MCF 10A (cell line): ENCODE measurements at regions of chr5 and their contacts with region 1.

Region 1: DNA sequence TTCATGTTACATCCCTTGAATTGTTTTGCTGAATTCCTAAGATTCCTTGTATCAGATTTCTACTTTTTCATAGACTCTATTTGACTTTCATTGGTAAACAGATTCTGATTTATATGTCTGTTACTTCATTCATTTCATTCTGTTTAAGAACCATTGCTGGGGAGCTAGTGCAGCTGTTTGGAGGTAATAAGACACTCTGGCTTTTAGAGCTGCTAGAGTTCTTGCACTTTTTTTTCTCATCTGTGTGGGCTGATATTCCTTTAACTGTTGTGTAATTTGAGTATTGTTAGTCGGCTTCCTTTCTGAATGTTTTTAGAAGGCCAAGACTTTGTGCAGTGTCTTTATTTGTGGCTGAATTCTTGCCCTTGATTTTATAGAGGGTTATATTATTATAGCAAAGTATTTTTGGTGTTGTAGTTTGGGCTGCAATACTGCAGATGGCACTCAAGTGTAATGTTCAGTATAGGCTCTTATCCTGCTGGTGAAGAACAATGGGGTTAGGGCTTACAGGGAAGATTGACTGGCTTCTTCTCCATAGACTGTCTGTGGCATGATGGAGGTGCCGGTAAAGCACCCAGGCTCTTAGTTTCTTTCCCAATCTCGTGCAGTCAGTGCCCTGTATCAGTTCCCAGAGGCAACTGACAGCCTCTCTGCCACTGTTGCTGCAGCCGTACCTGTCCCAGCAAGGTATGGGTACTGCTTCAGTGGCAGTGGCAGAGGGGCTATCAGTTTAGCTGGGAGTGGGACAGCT is 162.2 kb downstream of the OXCT1 start:
- DNase-seq: peak; percentile 56
- H3K4me3 Mint-ChIP-seq: no peak overlapping the region
- H3K27ac Mint-ChIP-seq: no peak overlapping the region
- H3K4me1 Mint-ChIP-seq: peaks cover 6% of the 10 kb centered on the region
- H3K27me3 Mint-ChIP-seq: peaks cover 22% of the 10 kb centered on the region
- CTCF ChIP-seq: peak; percentile 54

Region 2: GRCh38 chr5:41683181-41683580 is 24.8 kb before region 1 on chr5:
- CTCF ChIA-PET with region 1: no interaction called
- POLR2A ChIA-PET with region 1: no interaction called
- intact Hi-C with region 1: no loop called
- DNase-seq: no peak
- H3K4me3 Mint-ChIP-seq: no peak overlapping the region
- H3K27ac Mint-ChIP-seq: no peak overlapping the region
- H3K4me1 Mint-ChIP-seq: no peaks in the 10 kb centered on the region
- H3K27me3 Mint-ChIP-seq: no peaks in the 10 kb centered on the region
- CTCF ChIP-seq: no peak

Region 3: DNA sequence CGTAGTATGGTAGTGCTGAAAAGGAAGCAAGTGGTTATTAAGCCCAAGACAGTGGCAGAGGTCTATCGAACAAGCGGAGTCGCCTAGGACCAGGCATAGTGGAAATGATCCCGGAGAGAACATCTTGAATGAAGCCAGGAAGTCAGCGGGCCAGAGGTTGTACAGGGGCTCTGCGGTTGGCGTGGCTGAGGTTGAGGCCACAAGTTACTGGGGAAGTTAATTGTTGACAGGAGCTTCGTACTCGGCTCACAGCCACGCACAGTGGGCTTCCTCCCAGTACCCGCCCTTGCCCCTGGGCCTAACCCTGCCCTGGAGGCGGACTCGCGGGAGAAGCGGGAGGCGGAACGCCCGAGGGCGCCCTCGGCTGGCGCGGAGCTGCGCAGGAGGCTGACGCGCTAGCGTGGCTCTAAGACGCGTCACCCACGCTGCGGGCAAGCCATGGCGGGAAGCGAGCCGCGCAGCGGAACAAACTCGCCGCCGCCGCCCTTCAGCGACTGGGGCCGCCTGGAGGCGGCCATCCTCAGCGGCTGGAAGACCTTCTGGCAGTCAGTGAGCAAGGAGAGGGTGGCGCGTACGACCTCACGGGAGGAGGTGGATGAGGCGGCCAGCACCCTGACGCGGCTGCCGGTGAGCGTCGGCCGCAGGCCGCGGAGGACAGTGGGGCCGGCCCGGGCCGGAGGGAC is 217.0 kb after region 1 on chr5 and contains the start of gene FBXO4:
- CTCF ChIA-PET with region 1: no interaction called
- POLR2A ChIA-PET with region 1: no interaction called
- intact Hi-C with region 1: loop called (anchors 1 kb)
- DNase-seq: peak; percentile 69
- H3K4me3 Mint-ChIP-seq: peak within 1 kb of the TSS; percentile 68
- H3K27ac Mint-ChIP-seq: peak within 1 kb of the TSS; percentile 86
- H3K4me1 Mint-ChIP-seq: no peaks in the 10 kb centered on the region
- H3K27me3 Mint-ChIP-seq: no peaks in the 10 kb centered on the region
- CTCF ChIP-seq: peak; percentile 23
- total RNA-seq, gene FBXO4: 18.4 and 20.2 TPM in 2 replicates

Region 4: GRCh38 chr5:42767491-42768105 is 1059.6 kb after region 1 on chr5:
- CTCF ChIA-PET with region 1: interaction called, 3 read pairs
- POLR2A ChIA-PET with region 1: no interaction called
- intact Hi-C with region 1: loop called (anchors 10 kb)
- DNase-seq: peak; percentile 58
- H3K4me3 Mint-ChIP-seq: no peak overlapping the region
- H3K27ac Mint-ChIP-seq: no peak overlapping the region
- H3K4me1 Mint-ChIP-seq: peaks cover 1% of the 10 kb centered on the region
- H3K27me3 Mint-ChIP-seq: no peaks in the 10 kb centered on the region
- CTCF ChIP-seq: peak; percentile 64